ENCODE measurements at regions of chr9 and their contacts with region 1.

Region 1: GRCh38 chr9:33816327-33817252 is at the start of gene UBE2R2:
- DNase-seq: peak; percentile 90
- H3K4me3 Mint-ChIP-seq: peak within 1 kb of the TSS; percentile 93
- H3K27ac Mint-ChIP-seq: peak within 1 kb of the TSS; percentile 98
- H3K4me1 Mint-ChIP-seq: peaks cover 56% of the 10 kb centered on the region
- H3K27me3 Mint-ChIP-seq: peaks cover 5% of the 10 kb centered on the region
- total RNA-seq, gene UBE2R2: 40.0 and 41.0 TPM in 2 replicates

Region 2: DNA sequence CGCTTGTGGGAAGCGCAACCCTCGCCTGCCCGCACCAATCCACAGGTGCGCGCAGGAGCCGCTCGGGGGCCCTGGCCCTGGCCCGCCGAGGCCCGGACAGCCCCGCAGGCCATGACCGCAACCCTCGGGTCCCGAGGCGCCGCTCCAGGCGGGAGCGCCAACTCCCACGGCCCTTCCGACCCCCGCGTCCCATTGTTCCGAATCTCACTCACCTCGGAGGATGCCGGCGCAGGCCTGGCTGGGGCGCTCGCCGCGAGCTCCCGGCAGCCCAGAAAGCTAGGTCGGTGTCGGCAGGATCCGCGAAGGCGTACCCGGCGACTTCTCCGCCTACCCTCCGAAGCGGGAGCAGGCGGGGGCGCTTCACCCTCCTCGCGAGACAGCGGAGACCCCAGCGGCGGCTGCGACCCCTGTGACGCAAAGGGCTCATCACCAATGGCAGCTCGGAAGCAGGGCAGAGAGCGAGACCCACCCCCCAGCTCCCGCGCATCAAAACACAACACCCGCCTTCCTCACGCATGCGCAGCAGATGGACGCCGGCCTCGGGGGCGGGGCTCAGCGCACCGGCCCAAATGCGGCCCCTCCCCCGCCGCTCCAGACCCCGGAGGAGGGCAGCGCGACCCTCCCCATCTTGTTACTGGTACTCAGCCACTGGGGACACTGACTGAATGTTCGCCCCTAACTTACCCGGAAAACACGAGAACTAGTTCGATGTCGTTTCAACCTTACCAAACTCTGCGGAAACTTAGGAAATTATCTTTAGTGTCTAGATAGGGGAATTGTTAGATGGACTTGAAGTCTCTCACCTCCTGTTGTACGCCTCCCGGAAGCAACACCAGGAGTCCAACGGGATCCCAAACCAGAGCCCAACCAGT is 1265.8 kb before region 1 on chr9:
- intact Hi-C with region 1: loop called (anchors 5 kb)
- DNase-seq: peak; percentile 91
- H3K4me3 Mint-ChIP-seq: peak overlapping the region; percentile 93
- H3K27ac Mint-ChIP-seq: peak overlapping the region; percentile 99
- H3K4me1 Mint-ChIP-seq: peaks cover 38% of the 10 kb centered on the region
- H3K27me3 Mint-ChIP-seq: no peaks in the 10 kb centered on the region

Region 3: DNA sequence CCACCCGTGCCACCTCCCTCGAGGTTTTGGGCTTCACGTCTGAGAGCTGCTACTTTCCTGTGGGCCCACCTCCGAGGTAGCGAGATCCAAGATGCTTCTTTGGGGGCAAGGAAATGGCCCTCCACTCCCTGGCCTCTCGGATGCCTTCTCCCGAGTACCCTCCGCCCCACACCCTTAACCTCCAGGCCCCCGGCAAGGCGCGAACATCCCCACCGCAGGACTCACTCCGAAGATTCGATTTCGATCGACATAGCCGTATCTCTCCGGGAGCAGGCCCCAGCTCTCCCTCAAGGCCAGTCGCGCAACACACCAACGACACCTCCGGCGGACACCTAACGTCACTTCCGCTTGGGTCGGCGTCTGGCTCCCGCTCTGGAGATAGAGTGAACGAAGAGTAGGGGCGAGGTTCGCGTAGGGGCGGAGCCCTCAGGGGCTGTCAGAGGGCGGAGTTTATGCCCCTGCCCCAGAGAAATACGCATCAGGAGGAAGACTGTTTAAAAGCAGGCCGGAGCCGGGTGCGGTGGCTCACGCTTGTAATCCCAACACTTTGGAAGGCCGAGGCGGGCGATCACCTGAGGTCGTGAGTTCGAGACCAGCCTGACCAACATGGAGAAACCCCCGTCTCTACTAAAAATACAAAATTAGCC is 740.1 kb before region 1 on chr9 and contains the start of gene SMU1:
- intact Hi-C with region 1: loop called (anchors 5 kb)
- DNase-seq: peak; percentile 96
- H3K4me3 Mint-ChIP-seq: peak within 1 kb of the TSS; percentile 99
- H3K27ac Mint-ChIP-seq: peak within 1 kb of the TSS; percentile 96
- H3K4me1 Mint-ChIP-seq: peaks cover 37% of the 10 kb centered on the region
- H3K27me3 Mint-ChIP-seq: peaks cover 2% of the 10 kb centered on the region
- total RNA-seq, gene SMU1: 28.8 TPM in 2 replicates

Region 4: DNA sequence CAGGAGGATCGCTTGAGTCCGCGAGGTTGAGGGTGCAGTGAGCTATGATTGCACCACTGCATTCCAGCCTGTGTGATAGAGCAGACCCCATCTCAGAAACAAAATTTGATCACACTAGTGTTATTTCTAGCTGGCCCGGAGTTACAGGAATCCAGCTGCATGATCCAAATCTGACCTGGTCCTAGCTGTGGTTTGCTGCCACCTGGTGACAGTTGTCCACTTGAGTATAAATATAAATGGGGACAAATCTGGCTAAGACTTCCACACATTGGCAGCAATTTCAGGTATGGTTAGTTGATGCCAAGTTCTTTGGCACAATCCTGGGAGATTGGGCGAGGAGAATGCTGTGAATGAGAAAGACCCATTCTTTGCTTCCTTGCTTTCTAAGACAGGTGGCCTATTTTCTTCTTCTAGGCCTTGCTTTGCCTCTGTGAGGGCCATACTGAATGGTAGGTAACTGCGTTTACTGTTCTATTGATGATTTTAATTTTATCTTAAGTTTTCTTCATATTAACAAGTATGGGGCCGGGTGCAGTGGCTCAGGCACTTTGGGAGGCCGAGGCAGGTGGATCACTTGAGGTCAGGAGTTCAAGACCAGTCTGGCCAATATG is 35.7 kb after region 1 on chr9:
- intact Hi-C with region 1: loop called (anchors 1 kb)
- DNase-seq: peak; percentile 5
- H3K4me3 Mint-ChIP-seq: no peak overlapping the region
- H3K27ac Mint-ChIP-seq: no peak overlapping the region
- H3K4me1 Mint-ChIP-seq: peaks cover 17% of the 10 kb centered on the region
- H3K27me3 Mint-ChIP-seq: no peaks in the 10 kb centered on the region

Region 5: DNA sequence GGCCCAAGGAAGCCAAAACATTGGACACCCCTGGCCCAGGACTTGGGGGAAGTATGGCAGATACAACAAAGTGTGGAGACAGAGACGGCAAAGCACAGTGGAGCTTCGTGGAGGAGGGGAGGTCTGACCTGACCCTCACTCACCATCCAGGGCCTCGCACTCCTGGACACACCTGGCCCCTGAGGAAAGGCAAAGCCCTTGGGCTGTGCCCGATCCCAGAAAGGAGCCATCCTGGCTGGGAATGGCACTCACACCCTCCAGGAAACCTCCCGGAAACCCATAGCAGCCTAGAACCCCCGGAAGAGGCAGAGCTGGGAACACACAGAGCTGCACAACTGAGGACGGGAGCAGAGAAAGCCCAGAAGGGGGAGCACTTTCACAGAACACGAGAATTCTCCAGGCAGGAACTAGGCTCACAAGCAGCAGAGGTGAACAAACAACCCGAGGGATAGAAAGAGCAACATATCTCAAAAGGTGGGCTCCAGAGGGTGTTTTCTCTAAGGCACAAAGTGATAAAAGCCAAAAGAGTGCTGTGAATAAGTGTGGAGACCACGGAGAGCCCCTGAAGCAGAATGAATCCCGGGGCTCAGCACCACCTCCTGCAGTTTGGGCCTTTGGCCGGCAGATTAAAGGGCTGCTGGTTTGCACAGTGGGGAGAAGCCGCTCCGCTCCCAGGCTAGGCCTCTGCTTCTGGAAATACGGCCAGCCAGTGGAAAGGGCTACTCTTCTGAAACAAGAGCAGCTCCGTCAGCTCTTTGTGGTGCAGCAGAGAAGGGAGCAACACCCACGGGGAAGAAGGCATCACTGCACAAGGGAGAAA is 108.6 kb after region 1 on chr9:
- intact Hi-C with region 1: loop called (anchors 5 kb)
- DNase-seq: no peak
- H3K4me3 Mint-ChIP-seq: no peak overlapping the region
- H3K27ac Mint-ChIP-seq: no peak overlapping the region
- H3K4me1 Mint-ChIP-seq: no peaks in the 10 kb centered on the region
- H3K27me3 Mint-ChIP-seq: no peaks in the 10 kb centered on the region

Region 6: GRCh38 chr9:34072868-34073590 is 256.4 kb after region 1 on chr9:
- intact Hi-C with region 1: loop called (anchors 1 kb)
- DNase-seq: no peak
- H3K4me3 Mint-ChIP-seq: no peak overlapping the region
- H3K27ac Mint-ChIP-seq: no peak overlapping the region
- H3K4me1 Mint-ChIP-seq: peaks cover 5% of the 10 kb centered on the region
- H3K27me3 Mint-ChIP-seq: no peaks in the 10 kb centered on the region

Region 7: GRCh38 chr9:34178520-34179212 is 362.1 kb after region 1 on chr9 and contains the start of gene UBAP1:
- intact Hi-C with region 1: loop called (anchors 2 kb)
- DNase-seq: peak; percentile 95
- H3K4me3 Mint-ChIP-seq: peak within 1 kb of the TSS; percentile 92
- H3K27ac Mint-ChIP-seq: peak within 1 kb of the TSS; percentile 94
- H3K4me1 Mint-ChIP-seq: peaks cover 5% of the 10 kb centered on the region
- H3K27me3 Mint-ChIP-seq: no peaks in the 10 kb centered on the region
- total RNA-seq, gene UBAP1: 30.0 and 33.4 TPM in 2 replicates